MCF 10A (cell line): ENCODE measurements at regions of chr5 and their contacts with region 1.

Region 1: DNA sequence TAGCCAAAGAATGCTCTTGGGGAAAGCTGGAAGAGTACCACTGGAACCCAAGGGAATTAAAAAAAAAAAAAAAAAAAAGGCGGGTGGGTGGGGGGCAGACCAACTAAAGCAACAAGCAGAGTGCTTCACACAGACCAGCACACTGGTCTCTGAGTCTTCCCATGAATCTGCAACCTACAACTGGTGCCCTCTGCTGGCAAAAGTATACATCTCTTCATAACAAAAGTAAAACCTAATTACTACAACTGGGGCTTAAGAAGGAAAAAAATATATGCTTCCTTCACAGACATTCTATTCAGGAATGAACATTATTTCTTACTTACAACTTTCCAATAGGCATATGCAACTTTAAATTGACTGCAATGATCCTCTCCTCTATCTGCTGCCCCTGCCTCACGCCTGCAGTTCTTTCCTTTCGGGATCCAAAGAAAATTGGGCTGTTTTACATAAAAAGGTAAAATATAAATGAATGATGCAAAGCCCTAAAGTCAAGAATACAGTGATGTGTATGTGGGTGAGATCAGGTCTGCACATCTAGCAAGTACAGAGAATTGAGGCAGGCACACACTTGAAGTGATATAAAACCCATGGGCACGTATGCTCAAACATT is 7.2 kb upstream of the KLHL3 start:
- DNase-seq: peak; percentile 91
- H3K4me3 Mint-ChIP-seq: no peak overlapping the region
- H3K27ac Mint-ChIP-seq: no peak overlapping the region
- H3K4me1 Mint-ChIP-seq: no peaks in the 10 kb centered on the region
- H3K27me3 Mint-ChIP-seq: no peaks in the 10 kb centered on the region
- CTCF ChIP-seq: peak; percentile 62

Region 2: GRCh38 chr5:136802383-136802782 is 940.8 kb before region 1 on chr5:
- CTCF ChIA-PET with region 1: interaction called, 8 read pairs
- POLR2A ChIA-PET with region 1: no interaction called
- intact Hi-C with region 1: loop called (anchors 2 kb)
- DNase-seq: peak; percentile 34
- H3K4me3 Mint-ChIP-seq: no peak overlapping the region
- H3K27ac Mint-ChIP-seq: no peak overlapping the region
- H3K4me1 Mint-ChIP-seq: no peaks in the 10 kb centered on the region
- H3K27me3 Mint-ChIP-seq: peaks cover 43% of the 10 kb centered on the region
- CTCF ChIP-seq: peak; percentile 49

Region 3: DNA sequence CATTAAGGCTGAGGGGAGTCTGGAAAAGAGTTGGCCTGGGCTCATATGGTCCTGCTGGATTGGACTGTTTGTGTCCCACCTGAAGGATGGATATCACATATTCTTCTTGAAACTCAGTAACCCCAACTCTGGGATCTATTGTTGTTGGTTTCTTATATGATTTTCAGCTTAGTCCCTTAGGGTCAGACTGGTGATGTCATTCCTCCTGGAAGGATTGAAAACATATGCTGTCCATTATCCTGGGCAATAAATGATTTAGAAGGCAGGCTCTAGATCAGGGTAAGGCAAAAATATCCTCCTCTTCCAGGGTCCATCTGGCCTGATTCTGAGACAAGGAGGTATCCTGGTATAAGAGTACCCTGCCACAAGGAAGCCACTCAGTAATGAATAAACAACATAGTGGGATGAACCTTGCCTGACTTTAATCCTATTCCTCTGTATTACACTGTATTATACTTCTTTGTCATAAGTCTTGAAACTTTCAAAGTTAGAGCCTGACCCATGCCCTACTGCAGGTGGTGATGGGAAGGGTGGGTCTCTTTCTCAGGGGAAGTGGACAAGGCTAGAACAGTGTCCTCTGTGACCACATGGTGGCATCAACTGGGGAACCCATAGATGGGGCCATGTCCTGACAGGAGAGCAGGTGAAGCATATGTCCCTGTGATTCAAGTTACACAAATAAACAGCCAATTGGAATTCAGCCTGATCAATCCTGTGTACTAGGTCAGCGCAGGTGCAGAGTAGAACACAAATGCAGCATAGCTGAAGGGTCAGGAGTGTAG is 923.4 kb before region 1 on chr5:
- CTCF ChIA-PET with region 1: no interaction called
- POLR2A ChIA-PET with region 1: no interaction called
- intact Hi-C with region 1: no loop called
- DNase-seq: no peak
- H3K4me3 Mint-ChIP-seq: no peak overlapping the region
- H3K27ac Mint-ChIP-seq: no peak overlapping the region
- H3K4me1 Mint-ChIP-seq: no peaks in the 10 kb centered on the region
- H3K27me3 Mint-ChIP-seq: peaks cover 17% of the 10 kb centered on the region
- CTCF ChIP-seq: no peak

Region 4: DNA sequence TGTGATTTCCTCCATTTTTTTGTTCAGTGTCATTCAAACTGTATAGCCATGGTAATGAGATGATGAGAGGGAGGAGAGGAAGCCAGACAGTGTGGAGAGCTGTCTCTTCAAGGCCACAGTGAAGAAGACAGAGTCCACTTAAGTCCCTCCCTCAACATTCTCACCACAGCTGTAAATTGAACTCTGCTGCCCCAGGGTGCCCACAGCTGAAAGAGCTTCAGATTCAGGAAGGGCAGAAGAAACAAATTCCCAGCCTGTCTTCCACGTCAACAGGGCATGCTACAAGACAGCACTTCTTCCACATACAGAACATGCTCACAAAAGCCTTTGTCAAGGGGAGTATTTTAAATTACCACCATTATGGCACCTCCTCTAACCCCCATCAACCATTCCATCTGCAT is 107.6 kb before region 1 on chr5:
- CTCF ChIA-PET with region 1: interaction called, 690 read pairs
- POLR2A ChIA-PET with region 1: interaction called, 19 read pairs
- intact Hi-C with region 1: no loop called
- DNase-seq: no peak
- H3K4me3 Mint-ChIP-seq: no peak overlapping the region
- H3K27ac Mint-ChIP-seq: no peak overlapping the region
- H3K4me1 Mint-ChIP-seq: no peaks in the 10 kb centered on the region
- H3K27me3 Mint-ChIP-seq: no peaks in the 10 kb centered on the region
- CTCF ChIP-seq: no peak

Region 5: GRCh38 chr5:137665678-137666460 is 77.3 kb before region 1 on chr5:
- CTCF ChIA-PET with region 1: interaction called, 236 read pairs
- POLR2A ChIA-PET with region 1: interaction called, 10 read pairs
- intact Hi-C with region 1: no loop called
- DNase-seq: no peak
- H3K4me3 Mint-ChIP-seq: no peak overlapping the region
- H3K27ac Mint-ChIP-seq: no peak overlapping the region
- H3K4me1 Mint-ChIP-seq: no peaks in the 10 kb centered on the region
- H3K27me3 Mint-ChIP-seq: peaks cover 24% of the 10 kb centered on the region
- CTCF ChIP-seq: no peak

Region 6: GRCh38 chr5:137695651-137696428 is 47.3 kb before region 1 on chr5:
- CTCF ChIA-PET with region 1: interaction called, 25 read pairs
- POLR2A ChIA-PET with region 1: no interaction called
- intact Hi-C with region 1: no loop called
- DNase-seq: no peak
- H3K4me3 Mint-ChIP-seq: no peak overlapping the region
- H3K27ac Mint-ChIP-seq: no peak overlapping the region
- H3K4me1 Mint-ChIP-seq: no peaks in the 10 kb centered on the region
- H3K27me3 Mint-ChIP-seq: peaks cover 11% of the 10 kb centered on the region
- CTCF ChIP-seq: no peak

Region 7: DNA sequence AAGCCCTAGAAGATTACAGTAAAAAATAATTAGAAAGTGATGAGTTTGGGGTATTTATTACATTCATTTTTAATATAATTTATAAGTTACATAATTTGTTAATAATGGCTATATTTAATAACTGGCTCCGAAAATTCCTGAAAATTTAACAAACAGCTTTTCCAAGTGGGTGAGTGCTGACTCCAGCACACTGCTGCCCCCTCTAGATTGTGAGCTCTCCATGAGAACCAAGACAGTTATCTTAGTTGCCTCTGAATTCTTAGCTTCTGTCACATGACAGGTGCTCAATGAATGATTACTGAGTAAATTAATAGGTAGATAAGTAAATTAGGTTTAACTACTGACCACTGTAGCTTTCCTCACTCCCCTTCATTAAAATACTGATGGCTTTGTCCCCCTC is 15.1 kb before region 1 on chr5:
- CTCF ChIA-PET with region 1: interaction called, 62 read pairs
- POLR2A ChIA-PET with region 1: no interaction called
- intact Hi-C with region 1: no loop called
- DNase-seq: no peak
- H3K4me3 Mint-ChIP-seq: no peak overlapping the region
- H3K27ac Mint-ChIP-seq: no peak overlapping the region
- H3K4me1 Mint-ChIP-seq: peaks cover 4% of the 10 kb centered on the region
- H3K27me3 Mint-ChIP-seq: no peaks in the 10 kb centered on the region
- CTCF ChIP-seq: no peak